Dorsolateral prefrontal cortex (tissue), 120 donors: ENCODE measurements at regions of chr17 and their contacts with region 1.

Region 1: DNA sequence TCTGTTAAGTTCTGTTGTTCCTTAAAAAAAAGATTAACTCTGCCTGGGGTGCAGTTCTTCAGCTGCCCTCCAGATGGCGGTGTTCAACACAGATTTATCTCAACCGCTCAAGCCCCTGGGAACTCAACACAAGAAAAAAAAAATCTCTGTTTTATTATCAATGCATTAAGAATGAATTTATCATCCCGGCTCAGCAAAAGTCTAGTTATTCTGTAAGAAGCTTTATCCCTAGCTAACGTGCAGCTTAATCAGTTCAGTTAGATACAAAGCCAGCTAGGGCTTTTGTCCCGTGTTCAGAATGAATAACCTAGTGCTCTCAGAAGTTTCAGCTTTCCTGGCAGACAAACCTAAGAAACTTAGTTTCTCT is 475.9 kb upstream of the CCL2 start:
- DNase-seq: peak in 9 of 10 donors; percentile 28 to 73 (median 58)
- H3K4me3 ChIP-seq: peak overlapping the region in 2 of 59 donors; percentile 4 to 17
- H3K27ac ChIP-seq: no peak overlapping the region
- H3K27me3 ChIP-seq: peaks cover 0 to 10% (median 0%) of the 10 kb centered on the region in 45 donors
- CTCF ChIP-seq: peak; percentile 89 to 100 (median 97)

Region 2: GRCh38 chr17:33871720-33872540 is 92.7 kb after region 1 on chr17:
- intact Hi-C with region 1: no loop called
- DNase-seq: peak in 2 of 10 donors; percentile 16 to 70
- H3K4me3 ChIP-seq: no peak overlapping the region
- H3K27ac ChIP-seq: no peak overlapping the region
- H3K27me3 ChIP-seq: peaks cover 0 to 7% (median 0%) of the 10 kb centered on the region in 45 donors
- CTCF ChIP-seq: no peak

Region 3: DNA sequence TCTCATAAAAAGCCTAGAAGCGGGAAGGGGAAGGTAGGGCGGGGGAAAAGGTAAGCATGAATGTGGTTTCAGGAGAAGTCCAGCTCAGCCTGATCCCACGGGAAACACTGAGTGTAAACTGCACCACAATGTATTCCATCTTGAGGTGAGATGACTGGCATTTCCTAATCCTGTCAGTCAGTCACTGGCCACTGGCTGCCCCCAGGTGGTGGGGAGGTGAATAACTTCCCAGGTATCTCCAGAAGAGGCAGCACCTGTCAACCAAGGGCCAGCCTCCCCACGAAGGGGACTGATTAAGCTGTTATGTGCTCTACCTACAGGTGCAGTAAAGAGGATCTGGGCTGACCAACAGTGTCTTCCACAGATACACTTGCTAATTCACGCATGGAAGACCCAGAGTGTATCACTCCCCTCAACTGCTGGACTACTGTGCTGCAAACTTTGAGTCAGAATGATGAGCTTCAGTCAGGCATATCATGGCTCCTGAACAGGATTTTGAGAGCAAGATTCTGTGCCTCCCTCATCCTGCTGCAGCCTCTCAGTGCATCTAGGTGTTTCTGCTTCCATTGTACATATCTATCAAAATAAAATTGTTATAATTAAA is 367.3 kb after region 1 on chr17:
- intact Hi-C with region 1: loop called in 1 of 2 experiments (anchors 5 kb)
- DNase-seq: peak in 6 of 10 donors; percentile 41 to 74 (median 52)
- H3K4me3 ChIP-seq: no peak overlapping the region
- H3K27ac ChIP-seq: no peak overlapping the region
- H3K27me3 ChIP-seq: peaks cover 0 to 11% (median 0%) of the 10 kb centered on the region in 45 donors
- CTCF ChIP-seq: peak in 54 of 56 donors; percentile 17 to 67 (median 54)

Region 4: DNA sequence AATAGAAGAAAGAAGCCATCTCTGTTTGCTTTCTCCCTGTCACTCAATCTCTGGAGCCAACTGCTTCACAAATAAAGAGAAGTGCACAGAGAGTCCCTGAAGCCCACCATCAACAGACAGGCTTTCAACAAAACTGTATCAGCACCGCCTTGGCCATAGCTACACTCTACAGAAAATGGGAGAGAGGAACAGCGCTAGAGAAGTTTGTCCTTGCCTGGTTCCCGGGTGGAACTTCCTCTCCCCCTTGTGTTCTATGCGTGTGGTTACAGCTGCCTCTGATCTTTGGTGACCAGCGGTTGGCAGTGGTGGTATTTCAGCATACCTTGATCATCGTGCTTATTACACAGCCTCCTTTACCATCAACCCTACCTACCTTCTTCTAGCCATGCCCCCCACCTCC is 384.4 kb after region 1 on chr17:
- intact Hi-C with region 1: loop called in 1 of 2 experiments (anchors 5 kb)
- DNase-seq: peak in 1 of 10 donors; percentile 42
- H3K4me3 ChIP-seq: no peak overlapping the region
- H3K27ac ChIP-seq: no peak overlapping the region
- H3K27me3 ChIP-seq: peaks cover 0 to 44% (median 0%) of the 10 kb centered on the region in 45 donors
- CTCF ChIP-seq: peak in 53 of 56 donors; percentile 39 to 70 (median 57)